Naive thymus-derived CD4-positive, alpha-beta T cell (primary cell): ENCODE measurements at regions of chr7 and their contacts with region 1.

Region 1: GRCh38 chr7:150668472-150668911 is 17.0 kb upstream of the GIMAP2 start:
- DNase-seq: peak in 8 of 9 donors; percentile 66 to 87 (median 81)
- ATAC-seq: peak; percentile 88
- H3K4me3 ChIP-seq: peak overlapping the region; percentile 30
- H3K4me3 Mint-ChIP-seq: peak overlapping the region; percentile 57 to 85 (median 72)
- H3K27ac ChIP-seq: peak overlapping the region; percentile 78
- H3K27ac Mint-ChIP-seq: peak overlapping the region; percentile 73 to 100 (median 97)
- H3K4me1 ChIP-seq: peaks cover 71 to 86% of the 10 kb centered on the region in 2 donors
- H3K4me1 Mint-ChIP-seq: peaks cover 58 to 99% (median 94%) of the 10 kb centered on the region in 7 donors
- H3K27me3 ChIP-seq: no peaks in the 10 kb centered on the region
- H3K27me3 Mint-ChIP-seq: no peaks in the 10 kb centered on the region

Region 2: GRCh38 chr7:150481186-150481920 is 187.1 kb before region 1 on chr7:
- CTCF ChIA-PET with region 1: no interaction called
- POLR2A ChIA-PET with region 1: interaction called, 5 read pairs
- intact Hi-C with region 1: loop called in 1 of 2 experiments (anchors 5 kb)
- DNase-seq: peak in 8 of 9 donors; percentile 46 to 81 (median 71)
- ATAC-seq: peak; percentile 68
- H3K4me3 ChIP-seq: peak overlapping the region; percentile 12
- H3K4me3 Mint-ChIP-seq: peak overlapping the region; percentile 79 to 97 (median 90)
- H3K27ac ChIP-seq: peak overlapping the region; percentile 95
- H3K27ac Mint-ChIP-seq: peak overlapping the region; percentile 97 to 100 (median 100)
- H3K4me1 ChIP-seq: peaks cover 84 to 89% of the 10 kb centered on the region in 2 donors
- H3K4me1 Mint-ChIP-seq: peaks cover 58 to 99% (median 92%) of the 10 kb centered on the region in 7 donors
- H3K27me3 ChIP-seq: no peaks in the 10 kb centered on the region
- H3K27me3 Mint-ChIP-seq: no peaks in the 10 kb centered on the region

Region 3: GRCh38 chr7:150648353-150649079 is 20.0 kb before region 1 on chr7:
- CTCF ChIA-PET with region 1: no interaction called
- POLR2A ChIA-PET with region 1: interaction called, 12 read pairs
- intact Hi-C with region 1: loop called (anchors 1 to 2 kb)
- DNase-seq: peak in 5 of 9 donors; percentile 30 to 63 (median 41)
- ATAC-seq: peak; percentile 78
- H3K4me3 ChIP-seq: no peak overlapping the region
- H3K4me3 Mint-ChIP-seq: peak overlapping the region; percentile 36 to 82 (median 54)
- H3K27ac ChIP-seq: peak overlapping the region; percentile 46
- H3K27ac Mint-ChIP-seq: peak overlapping the region; percentile 66 to 94 (median 88)
- H3K4me1 ChIP-seq: peaks cover 22 to 45% of the 10 kb centered on the region in 2 donors
- H3K4me1 Mint-ChIP-seq: peaks cover 26 to 84% (median 77%) of the 10 kb centered on the region in 7 donors
- H3K27me3 ChIP-seq: no peaks in the 10 kb centered on the region
- H3K27me3 Mint-ChIP-seq: no peaks in the 10 kb centered on the region

Region 4: GRCh38 chr7:150657526-150657925 is 11.0 kb before region 1 on chr7:
- CTCF ChIA-PET with region 1: no interaction called
- POLR2A ChIA-PET with region 1: interaction called, 17 read pairs
- intact Hi-C with region 1: loop called in 1 of 2 experiments (anchors 1 kb)
- DNase-seq: no peak
- ATAC-seq: no peak
- H3K4me3 ChIP-seq: no peak overlapping the region
- H3K4me3 Mint-ChIP-seq: no peak overlapping the region
- H3K27ac ChIP-seq: no peak overlapping the region
- H3K27ac Mint-ChIP-seq: peak overlapping the region in 3 of 9 donors; percentile 6 to 78 (median 20)
- H3K4me1 ChIP-seq: peaks cover 16 to 17% of the 10 kb centered on the region in 2 donors
- H3K4me1 Mint-ChIP-seq: peaks cover 22 to 57% (median 42%) of the 10 kb centered on the region in 7 donors
- H3K27me3 ChIP-seq: no peaks in the 10 kb centered on the region
- H3K27me3 Mint-ChIP-seq: no peaks in the 10 kb centered on the region

Region 5: DNA sequence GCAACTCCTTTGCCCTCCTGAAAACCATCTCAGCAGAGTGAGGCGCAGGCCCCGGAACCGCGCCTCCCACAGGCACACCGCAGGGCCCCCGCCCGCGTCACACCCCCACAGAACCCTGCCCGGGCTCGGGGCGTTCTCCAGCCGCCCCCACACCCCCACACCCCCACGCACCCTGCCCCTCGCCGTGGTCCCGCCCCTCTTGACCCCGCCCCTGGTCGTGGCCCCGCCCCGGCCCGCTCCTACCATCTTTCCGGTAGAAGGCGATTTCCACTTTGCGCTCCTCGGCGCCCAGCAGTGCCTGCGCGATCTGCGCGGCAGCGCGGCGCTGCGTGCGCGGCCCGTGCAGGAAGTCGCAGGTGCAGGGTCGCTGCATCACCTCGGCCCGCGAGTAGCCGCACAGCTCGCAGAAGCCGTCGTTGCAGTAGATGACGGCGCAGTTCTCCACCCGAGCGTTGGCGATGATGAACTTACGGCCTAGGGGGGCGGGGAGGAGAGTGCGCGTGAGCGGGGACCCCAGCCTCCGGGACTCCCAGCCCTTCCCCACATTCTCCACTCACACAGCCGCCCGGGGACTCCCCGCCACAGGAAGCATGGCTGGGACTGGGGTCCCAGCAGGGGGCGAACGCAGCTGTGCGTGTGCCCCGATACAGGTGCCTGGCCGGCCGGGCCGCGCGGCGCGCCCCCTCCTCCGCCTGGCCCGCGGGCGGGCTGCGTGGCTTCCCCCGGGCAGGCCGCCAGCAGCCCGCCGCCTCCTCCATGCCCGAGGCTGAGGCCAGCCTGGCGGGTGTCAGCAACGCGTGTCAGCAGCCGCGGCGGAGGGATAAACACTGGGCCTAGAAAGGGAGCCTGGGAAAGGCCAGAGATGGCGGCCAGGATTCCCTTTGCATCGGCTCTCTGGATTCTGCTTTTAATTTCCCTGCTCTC is 306.2 kb after region 1 on chr7:
- CTCF ChIA-PET with region 1: no interaction called
- POLR2A ChIA-PET with region 1: no interaction called
- intact Hi-C with region 1: loop called in 1 of 2 experiments (anchors 10 kb)
- DNase-seq: peak; percentile 63 to 84 (median 80)
- ATAC-seq: peak; percentile 85
- H3K4me3 ChIP-seq: peak overlapping the region; percentile 63
- H3K4me3 Mint-ChIP-seq: peak overlapping the region; percentile 85 to 92 (median 88)
- H3K27ac ChIP-seq: peak overlapping the region; percentile 73
- H3K27ac Mint-ChIP-seq: peak overlapping the region; percentile 59 to 97 (median 95)
- H3K4me1 ChIP-seq: peaks cover 20 to 47% of the 10 kb centered on the region in 2 donors
- H3K4me1 Mint-ChIP-seq: peaks cover 33 to 62% (median 55%) of the 10 kb centered on the region in 7 donors
- H3K27me3 ChIP-seq: peaks cover 7 to 13% of the 10 kb centered on the region in 2 donors
- H3K27me3 Mint-ChIP-seq: peaks cover 9 to 36% (median 25%) of the 10 kb centered on the region in 5 donors

Region 6: GRCh38 chr7:151291206-151291605 is 622.7 kb after region 1 on chr7:
- CTCF ChIA-PET with region 1: no interaction called
- POLR2A ChIA-PET with region 1: no interaction called
- intact Hi-C with region 1: no loop called
- DNase-seq: no peak
- ATAC-seq: no peak
- H3K4me3 ChIP-seq: no peak overlapping the region
- H3K4me3 Mint-ChIP-seq: no peak overlapping the region
- H3K27ac ChIP-seq: no peak overlapping the region
- H3K27ac Mint-ChIP-seq: no peak overlapping the region
- H3K4me1 ChIP-seq: no peaks in the 10 kb centered on the region
- H3K4me1 Mint-ChIP-seq: no peaks in the 10 kb centered on the region
- H3K27me3 ChIP-seq: no peaks in the 10 kb centered on the region
- H3K27me3 Mint-ChIP-seq: peaks cover 3 to 19% (median 10%) of the 10 kb centered on the region in 5 donors